Naive thymus-derived CD4-positive, alpha-beta T cell (primary cell): ENCODE measurements at regions of chrX and their contacts with region 1.

Region 1: DNA sequence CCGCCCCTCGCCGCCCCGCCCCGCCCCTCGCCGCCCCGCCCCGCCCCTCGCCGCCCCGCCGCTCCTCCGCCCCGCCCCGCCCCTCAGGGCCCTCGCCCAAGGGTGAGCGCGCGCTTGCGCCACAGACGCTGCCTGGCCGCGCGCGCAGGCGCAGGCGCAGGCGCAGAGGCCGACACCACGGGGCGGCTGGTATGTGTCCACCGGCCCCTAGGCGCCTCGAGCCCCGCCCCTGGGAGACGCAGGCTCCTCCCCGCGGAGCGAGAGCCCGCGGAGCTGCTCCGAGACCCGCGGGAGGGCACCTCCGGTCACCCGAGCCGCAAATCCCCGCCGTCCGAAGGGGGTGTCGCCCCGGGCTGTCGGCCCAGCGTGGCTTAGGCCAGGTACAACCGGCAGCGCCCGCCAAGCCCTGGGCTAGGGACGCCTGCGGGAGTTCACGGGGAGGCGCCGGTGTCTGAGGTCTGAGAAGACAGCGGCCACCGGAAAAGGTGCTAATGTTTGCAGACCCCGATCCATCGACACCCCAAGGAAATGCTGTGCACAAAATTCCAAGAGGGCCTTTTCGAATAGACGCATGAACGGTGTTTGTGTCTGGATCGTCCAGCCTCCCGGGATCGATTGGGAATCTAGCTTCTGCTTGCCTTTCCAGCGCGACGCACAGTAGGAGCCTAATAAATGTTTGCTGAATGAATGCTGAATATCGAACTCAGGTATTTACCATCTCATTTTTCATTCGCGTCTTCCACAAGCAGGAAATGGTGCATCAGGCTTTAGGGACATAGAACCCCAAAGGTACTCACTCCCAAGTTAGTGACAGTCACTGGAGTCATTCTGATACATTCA is 473 bp upstream of the CCNQ start:
- DNase-seq: peak; percentile 77 to 91 (median 82)
- ATAC-seq: peak; percentile 94
- H3K4me3 ChIP-seq: peak overlapping the region; percentile 69
- H3K4me3 Mint-ChIP-seq: peak overlapping the region; percentile 79 to 93 (median 90)
- H3K27ac ChIP-seq: peak overlapping the region; percentile 74
- H3K27ac Mint-ChIP-seq: peak overlapping the region in 7 of 9 donors; percentile 48 to 83 (median 64)
- H3K4me1 ChIP-seq: peaks cover 19 to 21% of the 10 kb centered on the region in 2 donors
- H3K4me1 Mint-ChIP-seq: peaks cover 23 to 60% (median 46%) of the 10 kb centered on the region in 7 donors
- H3K27me3 ChIP-seq: no peaks in the 10 kb centered on the region
- H3K27me3 Mint-ChIP-seq: no peaks in the 10 kb centered on the region

Region 2: DNA sequence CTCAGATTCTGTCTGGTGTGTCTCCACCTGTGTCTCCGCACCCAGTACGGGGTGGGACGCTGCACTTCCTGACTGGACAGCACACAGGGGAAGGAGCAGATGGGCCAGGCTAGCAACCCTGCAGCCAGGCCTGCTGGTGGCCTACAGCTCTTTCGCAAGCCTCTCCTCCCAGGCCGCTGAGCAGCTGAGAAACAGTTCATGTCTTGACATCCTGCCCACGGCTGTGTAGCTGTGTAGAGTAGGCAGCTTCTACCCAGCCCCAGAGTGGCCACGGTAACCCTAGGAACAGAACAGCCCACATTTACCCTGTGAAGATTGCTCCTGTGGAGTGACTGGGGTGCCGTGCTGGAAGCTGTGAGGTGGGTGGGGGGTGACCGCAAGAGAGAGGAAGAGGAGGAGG is 39.4 kb before region 1 on chrX:
- CTCF ChIA-PET with region 1: no interaction called
- POLR2A ChIA-PET with region 1: no interaction called
- intact Hi-C with region 1: loop called in 1 of 2 experiments (anchors 5 kb)
- DNase-seq: no peak
- ATAC-seq: no peak
- H3K4me3 ChIP-seq: no peak overlapping the region
- H3K4me3 Mint-ChIP-seq: no peak overlapping the region
- H3K27ac ChIP-seq: no peak overlapping the region
- H3K27ac Mint-ChIP-seq: no peak overlapping the region
- H3K4me1 ChIP-seq: no peaks in the 10 kb centered on the region
- H3K4me1 Mint-ChIP-seq: peaks cover 0 to 4% (median 0%) of the 10 kb centered on the region in 7 donors
- H3K27me3 ChIP-seq: no peaks in the 10 kb centered on the region
- H3K27me3 Mint-ChIP-seq: no peaks in the 10 kb centered on the region

Region 3: DNA sequence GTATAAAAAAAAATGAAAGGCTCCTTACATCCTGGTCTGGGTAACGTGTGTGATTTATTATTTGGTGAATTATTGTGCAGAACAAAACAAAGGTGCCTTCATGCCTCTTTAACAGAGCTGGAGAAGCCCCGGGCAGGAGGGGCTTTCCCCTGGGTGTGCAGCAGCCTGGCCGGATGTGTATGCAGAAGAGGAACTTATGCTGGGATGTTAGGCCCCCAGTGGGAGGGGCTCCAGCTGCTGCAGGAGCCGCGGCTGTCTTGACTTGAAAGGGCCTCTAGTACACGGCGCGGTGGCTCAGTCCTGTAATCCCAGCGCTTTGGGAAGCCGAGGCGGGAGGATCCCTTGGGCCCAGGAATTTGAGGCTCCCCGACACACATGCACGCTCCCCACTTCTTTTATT is 16.5 kb before region 1 on chrX:
- CTCF ChIA-PET with region 1: no interaction called
- POLR2A ChIA-PET with region 1: interaction called, 6 read pairs
- intact Hi-C with region 1: loop called (anchors 1 kb)
- DNase-seq: peak; percentile 33 to 73 (median 65)
- ATAC-seq: peak; percentile 100
- H3K4me3 ChIP-seq: peak overlapping the region; percentile 20
- H3K4me3 Mint-ChIP-seq: peak overlapping the region; percentile 59 to 88 (median 72)
- H3K27ac ChIP-seq: peak overlapping the region; percentile 41
- H3K27ac Mint-ChIP-seq: peak overlapping the region; percentile 72 to 85 (median 79)
- H3K4me1 ChIP-seq: peaks cover 0 to 14% of the 10 kb centered on the region in 2 donors
- H3K4me1 Mint-ChIP-seq: peaks cover 10 to 39% (median 25%) of the 10 kb centered on the region in 7 donors
- H3K27me3 ChIP-seq: no peaks in the 10 kb centered on the region
- H3K27me3 Mint-ChIP-seq: no peaks in the 10 kb centered on the region